AG04449 (cell line): ENCODE measurements at regions of chr12 and their contacts with region 1.

Region 1: GRCh38 chr12:8108808-8109398 is 14.5 kb upstream of the CLEC4A start:
- DNase-seq: peak; percentile 40
- H3K4me3 ChIP-seq: no peak overlapping the region
- CTCF ChIP-seq: peak; percentile 92

Region 2: DNA sequence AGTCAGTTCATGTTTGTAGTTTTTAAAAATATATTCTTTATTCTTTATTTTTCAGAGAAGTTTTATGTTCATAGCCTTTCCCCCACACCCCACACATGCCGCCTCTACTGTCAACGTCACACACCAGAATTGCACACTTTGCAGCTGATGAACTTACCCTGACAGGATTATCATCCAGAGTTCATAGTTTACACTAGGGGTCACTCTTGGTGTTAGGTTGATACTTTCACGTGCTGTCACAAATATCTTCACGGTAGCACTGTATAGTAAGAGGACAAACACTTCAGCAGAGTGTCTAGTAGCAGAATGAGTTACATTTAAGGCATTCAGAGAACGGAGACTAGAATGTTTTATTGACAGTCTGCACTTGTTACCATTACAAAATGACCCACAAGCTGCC is 392.5 kb before region 1 on chr12:
- CTCF ChIA-PET with region 1: no interaction called
- POLR2A ChIA-PET with region 1: no interaction called
- DNase-seq: no peak
- H3K4me3 ChIP-seq: no peak overlapping the region
- CTCF ChIP-seq: no peak

Region 3: GRCh38 chr12:8096281-8096915 is 12.5 kb before region 1 on chr12:
- CTCF ChIA-PET with region 1: interaction called, 31 read pairs
- POLR2A ChIA-PET with region 1: no interaction called
- DNase-seq: no peak
- H3K4me3 ChIP-seq: no peak overlapping the region
- CTCF ChIP-seq: no peak

Region 4: GRCh38 chr12:8120072-8120713 is 11.3 kb after region 1 on chr12:
- CTCF ChIA-PET with region 1: interaction called, 35 read pairs
- POLR2A ChIA-PET with region 1: no interaction called
- DNase-seq: no peak
- H3K4me3 ChIP-seq: no peak overlapping the region
- CTCF ChIP-seq: no peak

Region 5: GRCh38 chr12:8127138-8127537 is 18.2 kb after region 1 on chr12:
- CTCF ChIA-PET with region 1: interaction called, 16 read pairs
- POLR2A ChIA-PET with region 1: no interaction called
- DNase-seq: no peak
- H3K4me3 ChIP-seq: no peak overlapping the region
- CTCF ChIP-seq: no peak

Region 6: DNA sequence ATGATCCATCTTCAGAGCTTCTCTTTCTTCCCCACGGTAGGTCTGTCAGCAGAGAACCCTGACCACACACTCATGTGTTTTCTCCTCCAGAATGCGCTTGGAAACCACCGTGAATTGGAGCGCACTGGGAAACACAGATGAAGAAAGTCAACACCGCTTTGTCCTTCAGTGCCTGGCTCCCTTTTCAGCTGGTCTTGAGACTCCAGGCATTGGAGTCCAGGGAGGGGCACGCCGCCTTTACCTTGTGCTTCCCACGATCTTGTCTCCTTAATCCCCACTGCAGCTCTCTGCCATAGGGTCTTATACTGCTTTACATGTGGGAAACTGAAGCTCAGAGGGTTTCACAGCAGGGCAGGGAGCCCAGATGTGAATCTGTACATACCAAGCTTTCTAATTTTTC is 117.5 kb after region 1 on chr12:
- CTCF ChIA-PET with region 1: interaction called, 46 read pairs
- POLR2A ChIA-PET with region 1: no interaction called
- DNase-seq: no peak
- H3K4me3 ChIP-seq: no peak overlapping the region
- CTCF ChIP-seq: no peak